ENCODE measurements at regions of chr4 and their contacts with region 1.

Region 1: DNA sequence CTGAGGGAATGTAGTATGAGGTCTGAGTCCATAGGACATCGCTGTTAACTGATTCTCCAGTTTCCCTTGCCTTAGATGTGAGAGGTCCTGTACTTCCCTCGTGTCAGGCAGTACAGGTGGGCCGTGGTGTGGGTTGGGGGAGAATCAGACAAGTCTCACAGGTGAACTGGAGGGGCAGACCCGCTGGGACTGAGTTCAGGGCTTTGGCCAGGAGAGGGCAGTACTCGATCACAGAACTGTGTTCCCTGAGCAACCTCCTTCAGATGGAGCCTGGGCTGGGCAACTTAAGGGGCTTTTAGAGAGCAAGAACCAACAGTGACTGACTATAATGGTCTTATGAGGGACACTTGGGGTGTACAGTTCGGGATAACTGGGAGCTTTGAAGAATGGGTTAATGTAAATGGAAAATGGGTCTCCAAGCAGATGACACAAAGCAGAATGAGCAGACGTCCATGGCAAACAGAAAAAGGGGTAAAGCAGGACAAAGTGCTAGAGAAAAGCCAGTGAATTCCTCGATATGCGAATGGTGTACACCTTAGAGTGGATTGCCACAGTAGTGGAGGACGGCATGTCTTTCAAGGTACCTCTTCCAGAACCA is 83.6 kb downstream of the CCNG2 start:
- DNase-seq: peak; percentile 77
- H3K4me3 Mint-ChIP-seq: no peak overlapping the region
- H3K27ac Mint-ChIP-seq: no peak overlapping the region
- H3K4me1 Mint-ChIP-seq: no peaks in the 10 kb centered on the region
- H3K27me3 Mint-ChIP-seq: peaks cover 15% of the 10 kb centered on the region

Region 2: GRCh38 chr4:77251751-77252150 is 11.2 kb after region 1 on chr4:
- CTCF ChIA-PET with region 1: no interaction called
- POLR2A ChIA-PET with region 1: no interaction called
- intact Hi-C with region 1: no loop called
- DNase-seq: no peak
- H3K4me3 Mint-ChIP-seq: no peak overlapping the region
- H3K27ac Mint-ChIP-seq: no peak overlapping the region
- H3K4me1 Mint-ChIP-seq: no peaks in the 10 kb centered on the region
- H3K27me3 Mint-ChIP-seq: peaks cover 14% of the 10 kb centered on the region

Region 3: DNA sequence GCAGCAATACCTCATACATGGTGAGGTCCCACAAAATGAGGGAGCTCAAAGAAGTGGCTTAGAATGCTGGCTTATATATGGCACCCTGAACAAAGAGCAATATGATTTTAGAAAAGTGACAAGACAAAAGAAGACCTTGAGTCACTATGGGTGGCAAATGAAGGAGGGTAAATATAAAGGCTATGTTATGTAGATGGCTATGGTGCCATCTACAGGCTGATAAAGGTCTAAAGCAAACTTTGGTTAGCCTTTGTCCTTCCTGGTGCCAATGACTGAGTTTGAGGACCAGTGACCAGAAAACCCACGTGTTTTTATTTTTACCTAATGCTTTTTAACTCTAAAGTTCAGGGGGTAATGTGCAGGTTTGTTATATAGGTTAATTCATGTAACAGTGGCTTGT is 68.3 kb after region 1 on chr4:
- CTCF ChIA-PET with region 1: interaction called, 12 read pairs
- POLR2A ChIA-PET with region 1: no interaction called
- intact Hi-C with region 1: loop called (anchors 1 kb)
- DNase-seq: no peak
- H3K4me3 Mint-ChIP-seq: no peak overlapping the region
- H3K27ac Mint-ChIP-seq: no peak overlapping the region
- H3K4me1 Mint-ChIP-seq: no peaks in the 10 kb centered on the region
- H3K27me3 Mint-ChIP-seq: peaks cover 10% of the 10 kb centered on the region

Region 4: DNA sequence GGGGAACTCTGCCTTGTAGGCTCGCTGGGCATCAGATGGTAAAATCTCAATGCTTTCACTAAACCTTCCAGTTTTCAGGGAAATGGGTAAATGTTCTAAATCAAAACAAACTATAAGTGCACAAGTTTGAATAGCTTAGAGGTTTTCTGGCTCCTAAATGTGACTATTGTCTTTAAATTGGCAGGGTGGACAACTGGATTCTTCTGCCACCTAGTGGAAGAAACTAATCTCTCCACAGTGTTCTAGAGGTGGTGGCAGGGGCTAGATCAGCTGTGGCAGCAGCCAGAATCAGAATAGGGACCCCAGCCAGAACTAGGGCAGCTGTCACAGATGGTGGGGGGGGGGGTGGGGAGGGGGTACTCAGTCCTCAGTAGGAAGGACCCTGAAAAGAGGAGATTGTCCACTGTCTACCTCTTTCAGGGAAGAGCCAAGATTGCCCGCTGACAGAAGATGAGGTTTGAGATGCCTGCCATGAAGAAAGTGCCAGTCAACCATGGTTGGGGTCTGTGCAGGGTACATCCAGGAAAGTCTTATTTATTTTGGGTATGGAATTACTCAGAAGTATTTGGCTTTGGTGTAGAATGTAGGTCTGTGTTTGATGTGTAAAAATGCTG is 117.9 kb after region 1 on chr4:
- CTCF ChIA-PET with region 1: interaction called, 36 read pairs
- POLR2A ChIA-PET with region 1: no interaction called
- intact Hi-C with region 1: loop called (anchors 1 kb)
- DNase-seq: no peak
- H3K4me3 Mint-ChIP-seq: no peak overlapping the region
- H3K27ac Mint-ChIP-seq: no peak overlapping the region
- H3K4me1 Mint-ChIP-seq: no peaks in the 10 kb centered on the region
- H3K27me3 Mint-ChIP-seq: peaks cover 2% of the 10 kb centered on the region

Region 5: DNA sequence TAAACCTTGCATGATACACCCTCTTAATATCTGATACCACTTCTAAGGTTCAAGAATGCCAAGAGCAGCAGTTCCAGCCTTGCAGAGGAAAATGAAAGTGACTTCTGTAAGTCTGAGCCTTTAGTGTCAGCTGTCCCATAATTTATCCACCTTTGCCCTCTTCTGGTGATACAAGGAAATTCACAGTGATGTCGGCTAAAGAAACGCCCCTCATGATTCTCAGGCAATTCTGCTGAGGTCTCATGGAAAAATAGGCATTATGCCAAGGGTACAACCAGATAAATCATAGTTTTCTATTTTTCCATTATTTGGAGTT is 192.8 kb after region 1 on chr4:
- CTCF ChIA-PET with region 1: no interaction called
- POLR2A ChIA-PET with region 1: no interaction called
- intact Hi-C with region 1: loop called (anchors 5 kb)
- DNase-seq: peak; percentile 10
- H3K4me3 Mint-ChIP-seq: no peak overlapping the region
- H3K27ac Mint-ChIP-seq: no peak overlapping the region
- H3K4me1 Mint-ChIP-seq: peaks cover 14% of the 10 kb centered on the region
- H3K27me3 Mint-ChIP-seq: no peaks in the 10 kb centered on the region

Region 6: GRCh38 chr4:77618383-77619122 is 378.0 kb after region 1 on chr4:
- CTCF ChIA-PET with region 1: interaction called, 4 read pairs
- POLR2A ChIA-PET with region 1: no interaction called
- intact Hi-C with region 1: loop called (anchors 10 kb)
- DNase-seq: peak; percentile 71
- H3K4me3 Mint-ChIP-seq: no peak overlapping the region
- H3K27ac Mint-ChIP-seq: no peak overlapping the region
- H3K4me1 Mint-ChIP-seq: peaks cover 5% of the 10 kb centered on the region
- H3K27me3 Mint-ChIP-seq: peaks cover 15% of the 10 kb centered on the region

Region 7: DNA sequence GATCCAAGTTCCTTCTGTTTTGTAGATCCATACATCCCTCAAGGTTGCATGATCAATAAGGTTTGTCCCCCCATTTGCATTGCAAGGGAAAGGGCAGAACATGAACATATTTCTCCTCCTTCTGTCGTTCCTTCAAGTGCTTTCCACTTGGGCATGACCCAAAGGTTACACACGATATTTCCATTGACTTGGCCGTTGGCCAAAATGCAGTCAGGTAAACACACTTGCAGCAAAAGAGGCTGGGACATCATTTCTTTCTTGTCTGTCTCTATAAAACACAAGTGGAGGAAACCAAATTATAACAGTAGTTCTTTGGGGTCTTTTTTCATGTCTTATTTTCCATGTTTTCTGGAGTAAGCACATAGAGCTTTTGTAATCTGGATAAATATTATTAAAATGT is 972.6 kb after region 1 on chr4:
- CTCF ChIA-PET with region 1: no interaction called
- POLR2A ChIA-PET with region 1: no interaction called
- intact Hi-C with region 1: no loop called
- DNase-seq: no peak
- H3K4me3 Mint-ChIP-seq: no peak overlapping the region
- H3K27ac Mint-ChIP-seq: no peak overlapping the region
- H3K4me1 Mint-ChIP-seq: no peaks in the 10 kb centered on the region
- H3K27me3 Mint-ChIP-seq: peaks cover 2% of the 10 kb centered on the region